PC-3 (cell line): ENCODE measurements at regions of chr17 and their contacts with region 1.

Region 1: DNA sequence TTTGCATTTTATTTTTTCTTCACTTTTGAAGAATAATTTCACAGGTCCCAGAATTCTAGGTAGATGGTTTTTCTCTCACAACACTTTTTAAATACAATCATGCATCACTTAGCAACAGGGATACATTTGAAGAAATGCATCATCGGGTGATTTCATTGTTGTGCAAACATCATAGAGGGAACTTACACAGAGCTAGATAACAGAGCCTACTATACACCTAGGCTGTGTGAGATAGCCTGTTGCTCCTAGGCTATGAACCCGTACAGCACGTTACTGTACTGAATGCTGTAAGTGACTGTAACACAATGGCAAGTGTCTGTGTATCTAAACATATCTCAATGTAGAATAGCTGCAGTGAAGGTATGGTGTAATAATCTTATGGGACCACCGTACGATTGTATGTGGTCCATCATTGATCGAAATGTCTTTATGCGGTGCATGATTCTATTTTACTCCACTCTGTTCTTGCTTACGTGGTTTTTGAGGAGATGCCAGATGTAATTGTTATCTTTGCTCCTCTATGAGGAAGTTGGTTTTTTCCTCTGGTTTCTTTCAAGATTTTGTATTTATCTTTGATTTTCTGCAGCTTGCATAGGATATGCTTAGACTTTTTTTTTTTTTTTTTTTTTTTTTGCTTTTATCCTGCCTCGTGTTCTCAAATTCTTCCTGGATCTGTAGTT is 35.5 kb upstream of the TMEM92 start:
- DNase-seq: peak; percentile 73
- ATAC-seq: peak; percentile 99
- H3K4me3 ChIP-seq: no peak overlapping the region
- H3K27ac ChIP-seq: no peak overlapping the region
- H3K4me1 ChIP-seq: peaks cover 12% of the 10 kb centered on the region; the same call in 1 of the 2 replicates
- H3K27me3 ChIP-seq: peaks cover 6% of the 10 kb centered on the region; the same call in 1 of the 2 replicates
- CTCF ChIP-seq: no peak

Region 2: GRCh38 chr17:50101346-50102163 is 137.2 kb before region 1 on chr17:
- CTCF ChIA-PET with region 1: no interaction called
- POLR2A ChIA-PET with region 1: no interaction called
- intact Hi-C with region 1: no loop called
- DNase-seq: no peak
- ATAC-seq: peak; percentile 28
- H3K4me3 ChIP-seq: no peak overlapping the region
- H3K27ac ChIP-seq: no peak overlapping the region
- H3K4me1 ChIP-seq: 0 out of 2 replicates have a peak, but pooled peaks cover 5% of the 10 kb centered on the region
- H3K27me3 ChIP-seq: no peaks in the 10 kb centered on the region
- CTCF ChIP-seq: no peak

Region 3: DNA sequence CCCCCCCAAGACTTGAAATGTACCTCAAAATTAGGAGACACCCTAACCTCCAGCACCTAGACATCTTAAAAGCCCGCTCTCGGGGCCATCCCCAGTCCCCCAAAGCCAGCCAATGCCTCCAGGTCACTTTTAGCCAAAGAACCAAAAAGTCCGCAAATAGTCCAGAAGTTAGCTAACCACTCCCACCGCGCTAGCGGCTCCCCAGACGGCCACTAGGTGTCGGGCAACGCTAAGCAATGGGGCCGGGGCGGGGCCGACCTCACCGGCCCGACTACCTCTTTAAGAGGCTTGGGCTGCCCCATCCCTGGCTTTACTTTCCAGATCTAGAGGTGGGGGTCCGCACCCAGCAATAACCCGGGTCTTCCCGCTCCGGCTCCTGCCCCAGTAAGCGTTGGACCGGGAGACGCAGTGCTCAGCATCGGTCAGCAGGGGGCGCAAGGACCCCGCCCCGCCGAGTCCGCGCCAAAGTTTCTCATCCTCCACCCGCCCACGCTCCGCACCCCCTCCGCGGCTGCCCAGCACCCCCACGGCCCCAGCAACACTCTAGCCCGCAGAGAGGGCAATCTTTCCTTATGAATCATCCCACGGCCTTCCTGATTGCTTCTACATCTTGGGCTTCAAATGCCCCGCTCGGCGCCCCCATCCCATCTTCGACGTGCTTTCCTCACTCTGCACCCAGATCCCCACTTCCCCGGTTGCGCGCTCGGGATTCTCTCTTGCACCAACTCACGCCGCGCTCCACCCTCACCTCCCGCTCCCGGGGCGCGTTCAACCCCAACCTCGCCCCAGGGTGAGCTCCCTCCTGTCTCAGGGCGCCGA is 38.1 kb before region 1 on chr17:
- CTCF ChIA-PET with region 1: no interaction called
- POLR2A ChIA-PET with region 1: no interaction called
- intact Hi-C with region 1: no loop called
- DNase-seq: peak; percentile 93
- ATAC-seq: peak; percentile 74
- H3K4me3 ChIP-seq: peak overlapping the region; percentile 69
- H3K27ac ChIP-seq: peak overlapping the region; percentile 92
- H3K4me1 ChIP-seq: peaks cover 18% of the 10 kb centered on the region
- H3K27me3 ChIP-seq: 0 out of 2 replicates have a peak, but pooled peaks cover 6% of the 10 kb centered on the region
- CTCF ChIP-seq: peak; percentile 100

Region 4: GRCh38 chr17:50213026-50214022 is 25.4 kb before region 1 on chr17:
- CTCF ChIA-PET with region 1: interaction called, 17 read pairs
- POLR2A ChIA-PET with region 1: no interaction called
- intact Hi-C with region 1: no loop called
- DNase-seq: no peak
- ATAC-seq: no peak
- H3K4me3 ChIP-seq: no peak overlapping the region
- H3K27ac ChIP-seq: no peak overlapping the region
- H3K4me1 ChIP-seq: peaks cover 26% of the 10 kb centered on the region
- H3K27me3 ChIP-seq: no peaks in the 10 kb centered on the region
- CTCF ChIP-seq: no peak

Region 5: GRCh38 chr17:50218771-50219315 is 19.9 kb before region 1 on chr17:
- CTCF ChIA-PET with region 1: interaction called, 17 read pairs
- POLR2A ChIA-PET with region 1: no interaction called
- intact Hi-C with region 1: loop called (anchors 1 kb)
- DNase-seq: peak; percentile 82
- ATAC-seq: peak; percentile 28
- H3K4me3 ChIP-seq: peak overlapping the region; percentile 13; the same call in 1 of the 2 replicates
- H3K27ac ChIP-seq: peak overlapping the region; percentile 89
- H3K4me1 ChIP-seq: peaks cover 44% of the 10 kb centered on the region
- H3K27me3 ChIP-seq: no peaks in the 10 kb centered on the region
- CTCF ChIP-seq: no peak